Panc1 (cell line): ENCODE measurements at regions of chr7 and their contacts with region 1.

Region 1: GRCh38 chr7:49911909-49912308 is 138.5 kb downstream of the VWC2 start:
- DNase-seq: no peak
- ATAC-seq: no peak
- H3K4me3 ChIP-seq: no peak overlapping the region
- H3K27ac ChIP-seq: no peak overlapping the region
- H3K4me1 ChIP-seq: no peaks in the 10 kb centered on the region
- H3K27me3 ChIP-seq: no peaks in the 10 kb centered on the region
- CTCF ChIP-seq: no peak

Region 2: DNA sequence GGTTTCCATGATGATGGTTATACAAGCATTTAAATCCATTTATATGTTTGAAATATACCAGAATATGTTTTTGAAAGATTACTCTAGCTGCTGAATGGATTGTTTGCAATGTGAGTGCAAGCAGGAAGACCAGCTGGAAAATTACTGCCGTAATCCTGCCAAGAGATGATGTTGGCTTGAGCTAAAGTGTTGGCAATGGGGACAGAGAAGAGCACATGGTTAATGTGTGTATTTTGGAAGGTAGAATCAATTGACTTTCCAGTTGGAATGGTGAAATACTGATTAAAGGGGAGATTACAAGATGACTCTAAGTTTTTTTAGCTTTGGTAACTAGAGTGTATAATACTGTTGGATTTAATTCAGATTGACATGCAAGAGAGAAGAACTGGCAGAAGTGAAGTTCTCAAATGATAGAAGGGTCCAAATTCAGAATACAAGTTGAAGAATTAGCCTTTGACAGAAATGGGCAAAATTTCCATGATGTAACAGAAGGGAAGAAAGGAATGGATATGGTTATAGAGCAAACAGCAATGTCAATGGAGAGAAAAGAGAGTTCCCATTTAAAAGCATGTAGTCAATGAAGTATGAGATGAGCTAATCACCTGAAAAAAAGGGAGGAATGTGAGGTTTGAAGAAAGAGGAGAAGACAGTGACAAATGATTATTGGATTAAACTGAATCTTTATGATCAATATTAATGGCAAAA is 565.6 kb before region 1 on chr7:
- CTCF ChIA-PET with region 1: no interaction called
- POLR2A ChIA-PET with region 1: no interaction called
- in situ Hi-C with region 1: no loop called
- intact Hi-C with region 1: no loop called
- DNase-seq: no peak
- ATAC-seq: no peak
- H3K4me3 ChIP-seq: no peak overlapping the region
- H3K27ac ChIP-seq: no peak overlapping the region
- H3K4me1 ChIP-seq: no peaks in the 10 kb centered on the region
- H3K27me3 ChIP-seq: no peaks in the 10 kb centered on the region
- CTCF ChIP-seq: no peak

Region 3: GRCh38 chr7:50037086-50037485 is 125.2 kb after region 1 on chr7:
- CTCF ChIA-PET with region 1: no interaction called
- POLR2A ChIA-PET with region 1: no interaction called
- in situ Hi-C with region 1: no loop called
- intact Hi-C with region 1: no loop called
- DNase-seq: no peak
- ATAC-seq: no peak
- H3K4me3 ChIP-seq: no peak overlapping the region
- H3K27ac ChIP-seq: no peak overlapping the region
- H3K4me1 ChIP-seq: no peaks in the 10 kb centered on the region
- H3K27me3 ChIP-seq: no peaks in the 10 kb centered on the region
- CTCF ChIP-seq: no peak

Region 4: GRCh38 chr7:50056131-50056530 is 144.2 kb after region 1 on chr7:
- CTCF ChIA-PET with region 1: no interaction called
- POLR2A ChIA-PET with region 1: no interaction called
- in situ Hi-C with region 1: no loop called
- intact Hi-C with region 1: loop called (anchors 10 kb)
- DNase-seq: no peak
- ATAC-seq: no peak
- H3K4me3 ChIP-seq: no peak overlapping the region
- H3K27ac ChIP-seq: no peak overlapping the region
- H3K4me1 ChIP-seq: no peaks in the 10 kb centered on the region
- H3K27me3 ChIP-seq: no peaks in the 10 kb centered on the region
- CTCF ChIP-seq: no peak